CD4-positive, alpha-beta memory T cell (primary cell): ENCODE measurements at regions of chr1 and their contacts with region 1.

Region 1: DNA sequence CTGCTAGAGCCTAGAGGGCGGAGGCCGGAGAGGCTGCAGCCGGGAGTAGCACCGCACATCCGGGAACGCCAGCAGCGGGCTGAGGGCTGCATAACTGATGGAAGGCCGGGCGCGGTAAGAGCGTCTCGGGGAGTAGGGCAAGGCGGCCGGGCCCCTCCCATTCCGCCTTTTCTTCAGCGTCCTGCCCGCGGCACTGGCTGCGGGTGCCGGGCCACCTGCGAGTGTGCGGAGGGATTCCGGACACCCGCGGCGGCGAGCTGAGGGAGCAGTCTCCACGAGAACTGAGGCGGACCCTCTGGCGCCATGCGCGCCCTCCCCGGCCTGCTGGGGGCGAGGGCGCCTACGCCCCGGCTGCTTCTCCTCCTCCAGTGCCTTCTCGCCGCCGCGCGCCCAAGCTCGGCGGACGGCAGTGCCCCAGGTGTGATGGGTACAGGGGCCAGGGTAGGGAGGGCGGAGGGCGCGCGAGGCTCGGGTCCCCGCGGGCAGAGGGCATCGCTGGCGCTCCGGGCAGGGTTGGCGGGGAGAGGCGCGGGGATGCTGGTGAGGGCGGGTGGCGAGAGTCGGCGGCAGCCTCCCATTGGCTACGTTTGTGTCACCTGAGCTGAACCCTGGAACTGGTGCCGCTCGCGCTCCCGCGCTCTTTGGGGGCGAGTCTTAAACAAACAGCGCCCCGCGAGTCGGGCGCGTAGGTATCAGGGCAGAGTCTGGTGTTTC is 334.4 kb downstream of the SRGAP2C start:
- DNase-seq: peak; percentile 81 to 89 (median 85)
- H3K4me3 ChIP-seq: peak overlapping the region; percentile 71 to 83
- H3K4me3 Mint-ChIP-seq: peak overlapping the region; percentile 75 to 98 (median 92)
- H3K27ac ChIP-seq: peak overlapping the region; percentile 73
- H3K27ac Mint-ChIP-seq: peak overlapping the region; percentile 76 to 97 (median 95)
- H3K4me1 ChIP-seq: peaks cover 63% of the 10 kb centered on the region
- H3K4me1 Mint-ChIP-seq: peaks cover 52 to 83% (median 70%) of the 10 kb centered on the region in 4 donors
- H3K27me3 ChIP-seq: no peaks in the 10 kb centered on the region
- H3K27me3 Mint-ChIP-seq: no peaks in the 10 kb centered on the region

Region 2: GRCh38 chr1:121408354-121408753 is 110.8 kb before region 1 on chr1:
- CTCF ChIA-PET with region 1: no interaction called
- POLR2A ChIA-PET with region 1: no interaction called
- intact Hi-C with region 1: no loop called
- DNase-seq: no peak
- H3K4me3 ChIP-seq: no peak overlapping the region
- H3K4me3 Mint-ChIP-seq: no peak overlapping the region
- H3K27ac ChIP-seq: no peak overlapping the region
- H3K27ac Mint-ChIP-seq: no peak overlapping the region
- H3K4me1 ChIP-seq: no peaks in the 10 kb centered on the region
- H3K4me1 Mint-ChIP-seq: peaks cover 0 to 1% (median under 1%) of the 10 kb centered on the region in 4 donors
- H3K27me3 ChIP-seq: no peaks in the 10 kb centered on the region
- H3K27me3 Mint-ChIP-seq: no peaks in the 10 kb centered on the region

Region 3: DNA sequence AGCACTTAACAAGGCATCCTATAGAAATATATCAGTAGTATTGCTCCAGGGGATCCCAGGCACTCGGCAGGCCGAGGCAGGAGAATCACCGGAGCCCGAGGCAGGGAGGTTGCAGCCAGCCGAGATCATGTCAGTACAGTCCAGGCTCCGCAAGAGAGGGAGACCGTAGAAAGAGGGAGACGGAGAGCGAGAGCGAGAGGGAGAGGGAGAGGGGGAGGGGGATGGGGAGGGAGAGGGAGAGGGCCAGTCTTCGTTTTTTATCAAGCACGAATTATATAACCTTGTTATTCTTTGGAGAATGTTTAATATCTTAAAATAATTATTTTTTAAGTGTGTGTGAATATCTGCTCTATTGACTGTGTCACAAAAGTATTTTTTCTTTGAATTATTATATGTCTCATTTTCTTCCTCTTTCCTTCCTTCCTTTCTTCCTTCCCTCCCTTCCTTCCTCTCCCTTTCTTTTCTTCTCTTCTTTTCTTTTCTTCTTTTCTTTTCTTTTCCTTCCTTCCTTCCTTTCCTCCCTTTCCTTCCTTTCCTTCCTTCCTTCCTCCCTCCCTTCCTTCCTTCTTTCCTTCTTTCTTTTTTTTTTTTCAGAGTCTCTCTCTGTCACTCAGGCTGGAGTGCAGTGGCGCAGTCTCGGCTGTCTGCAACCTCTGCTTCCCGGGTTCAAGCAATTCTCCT is 100.7 kb before region 1 on chr1:
- CTCF ChIA-PET with region 1: no interaction called
- POLR2A ChIA-PET with region 1: no interaction called
- intact Hi-C with region 1: no loop called
- DNase-seq: no peak
- H3K4me3 ChIP-seq: no peak overlapping the region
- H3K4me3 Mint-ChIP-seq: no peak overlapping the region
- H3K27ac ChIP-seq: no peak overlapping the region
- H3K27ac Mint-ChIP-seq: peak overlapping the region in 1 of 7 donors; percentile 76
- H3K4me1 ChIP-seq: peaks cover 9% of the 10 kb centered on the region
- H3K4me1 Mint-ChIP-seq: peaks cover 3 to 22% (median 6%) of the 10 kb centered on the region in 4 donors
- H3K27me3 ChIP-seq: no peaks in the 10 kb centered on the region
- H3K27me3 Mint-ChIP-seq: peaks cover 0 to 7% of the 10 kb centered on the region in 2 donors

Region 4: GRCh38 chr1:121443001-121443540 is 76.1 kb before region 1 on chr1:
- CTCF ChIA-PET with region 1: interaction called, 14 read pairs
- POLR2A ChIA-PET with region 1: interaction called, 4 read pairs
- intact Hi-C with region 1: loop called (anchors 2 kb)
- DNase-seq: no peak
- H3K4me3 ChIP-seq: no peak overlapping the region
- H3K4me3 Mint-ChIP-seq: peak overlapping the region in 1 of 8 donors; percentile 18
- H3K27ac ChIP-seq: no peak overlapping the region
- H3K27ac Mint-ChIP-seq: no peak overlapping the region
- H3K4me1 ChIP-seq: peaks cover 10% of the 10 kb centered on the region
- H3K4me1 Mint-ChIP-seq: peaks cover 9 to 27% (median 15%) of the 10 kb centered on the region in 4 donors
- H3K27me3 ChIP-seq: no peaks in the 10 kb centered on the region
- H3K27me3 Mint-ChIP-seq: no peaks in the 10 kb centered on the region

Region 5: GRCh38 chr1:121458291-121459048 is 60.7 kb before region 1 on chr1:
- CTCF ChIA-PET with region 1: interaction called, 8 read pairs
- POLR2A ChIA-PET with region 1: interaction called, 21 read pairs
- intact Hi-C with region 1: no loop called
- DNase-seq: peak in 4 of 5 donors; percentile 23 to 43 (median 32)
- H3K4me3 ChIP-seq: peak overlapping the region in 1 of 2 donors; percentile 16
- H3K4me3 Mint-ChIP-seq: peak overlapping the region; percentile 80 to 88 (median 85)
- H3K27ac ChIP-seq: peak overlapping the region; percentile 46
- H3K27ac Mint-ChIP-seq: peak overlapping the region; percentile 43 to 94 (median 90)
- H3K4me1 ChIP-seq: peaks cover 3% of the 10 kb centered on the region
- H3K4me1 Mint-ChIP-seq: peaks cover 7 to 13% (median 9%) of the 10 kb centered on the region in 4 donors
- H3K27me3 ChIP-seq: no peaks in the 10 kb centered on the region
- H3K27me3 Mint-ChIP-seq: no peaks in the 10 kb centered on the region

Region 6: GRCh38 chr1:121483961-121484424 is 35.2 kb before region 1 on chr1:
- CTCF ChIA-PET with region 1: no interaction called
- POLR2A ChIA-PET with region 1: no interaction called
- intact Hi-C with region 1: no loop called
- DNase-seq: no peak
- H3K4me3 ChIP-seq: no peak overlapping the region
- H3K4me3 Mint-ChIP-seq: no peak overlapping the region
- H3K27ac ChIP-seq: no peak overlapping the region
- H3K27ac Mint-ChIP-seq: no peak overlapping the region
- H3K4me1 ChIP-seq: no peaks in the 10 kb centered on the region
- H3K4me1 Mint-ChIP-seq: peaks cover 0 to 7% (median 3%) of the 10 kb centered on the region in 4 donors
- H3K27me3 ChIP-seq: no peaks in the 10 kb centered on the region
- H3K27me3 Mint-ChIP-seq: no peaks in the 10 kb centered on the region

Region 7: GRCh38 chr1:121546830-121547591 is 27.8 kb after region 1 on chr1:
- CTCF ChIA-PET with region 1: interaction called, 16 read pairs
- POLR2A ChIA-PET with region 1: interaction called, 41 read pairs
- intact Hi-C with region 1: loop called (anchors 1 kb)
- DNase-seq: no peak
- H3K4me3 ChIP-seq: no peak overlapping the region
- H3K4me3 Mint-ChIP-seq: peak overlapping the region in 1 of 8 donors; percentile 22
- H3K27ac ChIP-seq: no peak overlapping the region
- H3K27ac Mint-ChIP-seq: peak overlapping the region in 6 of 7 donors; percentile 14 to 70 (median 60)
- H3K4me1 ChIP-seq: peaks cover 32% of the 10 kb centered on the region
- H3K4me1 Mint-ChIP-seq: peaks cover 40 to 61% (median 53%) of the 10 kb centered on the region in 4 donors
- H3K27me3 ChIP-seq: no peaks in the 10 kb centered on the region
- H3K27me3 Mint-ChIP-seq: no peaks in the 10 kb centered on the region

Region 8: DNA sequence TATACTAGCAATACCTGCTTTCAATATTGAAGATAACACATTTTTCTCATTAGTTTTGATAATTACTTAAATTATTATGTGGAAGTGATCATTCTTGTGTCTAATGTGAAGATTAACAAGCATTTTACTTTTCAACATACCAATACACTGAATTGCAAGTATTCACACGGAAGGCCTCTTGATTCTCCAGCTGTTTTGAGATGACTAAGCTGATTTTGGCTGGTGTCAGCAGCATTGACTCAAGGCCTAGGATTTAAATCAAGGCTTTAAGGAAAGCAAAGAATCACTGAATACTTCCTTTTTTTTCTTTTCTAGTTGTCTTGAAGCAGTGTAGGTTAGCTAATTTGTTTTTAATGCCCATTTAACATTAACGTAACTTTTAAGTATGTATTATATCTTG is 39.3 kb after region 1 on chr1:
- CTCF ChIA-PET with region 1: interaction called, 16 read pairs
- POLR2A ChIA-PET with region 1: interaction called, 41 read pairs
- intact Hi-C with region 1: no loop called
- DNase-seq: no peak
- H3K4me3 ChIP-seq: no peak overlapping the region
- H3K4me3 Mint-ChIP-seq: peak overlapping the region in 6 of 8 donors; percentile 65 to 80 (median 76)
- H3K27ac ChIP-seq: no peak overlapping the region
- H3K27ac Mint-ChIP-seq: peak overlapping the region in 1 of 7 donors; percentile 93
- H3K4me1 ChIP-seq: peaks cover 14% of the 10 kb centered on the region
- H3K4me1 Mint-ChIP-seq: peaks cover 23 to 51% (median 33%) of the 10 kb centered on the region in 4 donors
- H3K27me3 ChIP-seq: no peaks in the 10 kb centered on the region
- H3K27me3 Mint-ChIP-seq: no peaks in the 10 kb centered on the region

Region 9: DNA sequence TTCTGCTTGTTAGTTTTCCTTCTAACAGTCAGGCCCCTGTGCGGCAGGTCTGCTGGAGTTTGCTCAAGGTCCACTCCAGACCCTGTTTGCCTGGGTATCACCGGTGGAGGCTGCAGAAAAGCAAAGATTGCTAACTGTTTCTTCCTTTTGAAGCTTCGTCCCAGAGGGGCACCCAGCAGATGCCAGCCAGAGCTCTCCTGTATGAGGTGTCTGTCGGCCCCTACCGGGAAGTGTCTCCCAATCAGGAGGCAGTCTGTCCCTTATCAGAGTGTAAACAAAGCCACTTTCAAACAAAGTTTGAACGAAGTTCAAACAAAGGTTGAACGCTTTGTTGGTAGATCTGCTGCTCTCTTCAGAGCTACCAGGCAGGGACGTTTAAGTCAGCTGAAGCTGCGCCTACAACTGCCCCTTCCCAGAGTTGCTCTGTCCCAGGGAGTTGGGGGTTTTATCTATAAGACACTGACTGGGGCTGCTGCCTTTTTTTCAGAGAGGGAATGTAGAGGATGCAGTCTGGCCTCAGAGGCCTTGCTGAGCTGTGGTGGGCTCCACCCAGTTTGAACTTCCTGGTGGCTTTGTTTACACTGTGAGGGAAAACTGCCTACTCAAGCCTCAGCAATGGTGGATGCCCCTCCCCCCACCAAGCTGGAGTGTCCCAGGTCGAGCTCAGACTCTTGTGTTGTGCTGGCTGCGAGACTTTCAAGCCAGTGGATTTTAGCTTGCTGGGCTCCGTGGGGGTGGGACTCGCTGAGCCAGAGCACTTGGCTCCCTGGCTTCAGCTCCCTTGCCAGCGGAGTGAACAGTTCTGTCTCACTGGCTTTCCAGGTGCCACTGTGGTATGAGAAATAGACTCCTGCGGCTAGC is 67.4 kb after region 1 on chr1:
- CTCF ChIA-PET with region 1: interaction called, 5 read pairs
- POLR2A ChIA-PET with region 1: interaction called, 25 read pairs
- intact Hi-C with region 1: loop called (anchors 5 kb)
- DNase-seq: peak in 2 of 5 donors; percentile 8 to 13
- H3K4me3 ChIP-seq: no peak overlapping the region
- H3K4me3 Mint-ChIP-seq: peak overlapping the region in 7 of 8 donors; percentile 29 to 76 (median 64)
- H3K27ac ChIP-seq: no peak overlapping the region
- H3K27ac Mint-ChIP-seq: peak overlapping the region in 6 of 7 donors; percentile 13 to 83 (median 62)
- H3K4me1 ChIP-seq: peaks cover 34% of the 10 kb centered on the region
- H3K4me1 Mint-ChIP-seq: peaks cover 31 to 58% (median 41%) of the 10 kb centered on the region in 4 donors
- H3K27me3 ChIP-seq: no peaks in the 10 kb centered on the region
- H3K27me3 Mint-ChIP-seq: no peaks in the 10 kb centered on the region